ENCODE measurements at regions of chr2 and their contacts with region 1.

Region 1: DNA sequence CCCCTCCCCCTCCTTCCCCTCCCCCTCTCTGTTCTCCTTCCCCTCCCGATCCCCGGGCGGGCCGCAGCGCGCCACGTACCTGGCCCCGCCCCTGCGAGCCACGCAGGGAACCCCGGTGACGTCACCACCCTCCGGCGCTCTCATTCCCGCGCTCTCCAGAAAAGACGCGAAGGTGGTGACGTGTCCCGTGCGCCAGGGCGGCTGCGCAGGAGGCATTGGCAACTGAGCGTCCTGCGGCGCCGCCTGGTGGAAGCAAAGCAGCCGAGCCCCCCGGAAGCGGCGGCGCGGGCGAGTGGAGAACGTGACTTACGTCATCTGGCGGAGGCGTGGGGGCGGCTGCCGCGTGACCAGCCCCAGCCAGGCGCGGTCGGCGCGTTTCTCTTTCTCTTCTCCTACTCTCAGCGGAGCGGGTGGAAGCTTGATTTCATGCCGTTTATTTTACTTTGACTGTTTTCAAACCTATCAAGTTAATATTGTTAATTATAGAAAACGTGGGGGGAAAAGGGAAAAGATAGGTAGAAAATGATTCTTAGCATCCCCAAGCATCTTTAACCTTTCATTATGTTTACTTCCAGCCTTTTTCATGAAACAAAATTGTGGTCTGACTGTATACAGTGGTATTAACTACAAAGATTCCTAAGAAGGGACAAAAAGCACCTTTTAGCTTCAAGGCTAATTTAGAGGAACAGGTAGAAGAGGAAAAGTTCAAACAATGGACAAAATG is 48.1 kb downstream of the C2orf42 start:
- DNase-seq: peak; percentile 100
- ATAC-seq: peak; percentile 74
- H3K4me3 Mint-ChIP-seq: peak overlapping the region; percentile 84
- H3K27ac Mint-ChIP-seq: peak overlapping the region; percentile 96
- H3K4me1 Mint-ChIP-seq: peaks cover 76% of the 10 kb centered on the region
- H3K27me3 Mint-ChIP-seq: no peaks in the 10 kb centered on the region

Region 2: DNA sequence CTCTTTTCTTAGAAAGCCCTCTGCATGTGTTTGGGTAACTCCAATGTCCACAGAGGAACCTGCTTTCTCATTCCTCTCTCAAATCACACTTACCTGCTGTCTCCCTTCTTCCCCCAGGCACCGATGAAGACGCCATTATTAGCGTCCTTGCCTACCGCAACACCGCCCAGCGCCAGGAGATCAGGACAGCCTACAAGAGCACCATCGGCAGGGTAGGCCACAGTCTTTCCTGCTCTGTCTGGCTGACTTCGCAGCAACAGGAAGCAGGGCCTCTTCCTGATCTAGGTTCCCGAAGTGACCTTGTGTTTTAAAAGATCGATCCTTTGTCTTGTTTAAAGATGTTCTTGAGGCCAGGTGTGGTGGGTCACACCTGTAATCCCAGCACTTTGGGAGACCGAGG is 338.3 kb before region 1 on chr2:
- CTCF ChIA-PET with region 1: no interaction called
- POLR2A ChIA-PET with region 1: no interaction called
- DNase-seq: peak; percentile 20
- ATAC-seq: peak; percentile 33
- H3K4me3 Mint-ChIP-seq: no peak overlapping the region
- H3K27ac Mint-ChIP-seq: peak overlapping the region; percentile 82
- H3K4me1 Mint-ChIP-seq: peaks cover 19% of the 10 kb centered on the region
- H3K27me3 Mint-ChIP-seq: peaks cover 2% of the 10 kb centered on the region

Region 3: GRCh38 chr2:70062268-70062667 is 80.5 kb before region 1 on chr2:
- CTCF ChIA-PET with region 1: interaction called, 19 read pairs
- POLR2A ChIA-PET with region 1: interaction called, 3 read pairs
- DNase-seq: peak; percentile 41
- ATAC-seq: no peak
- H3K4me3 Mint-ChIP-seq: no peak overlapping the region
- H3K27ac Mint-ChIP-seq: no peak overlapping the region
- H3K4me1 Mint-ChIP-seq: peaks cover 5% of the 10 kb centered on the region
- H3K27me3 Mint-ChIP-seq: no peaks in the 10 kb centered on the region

Region 4: GRCh38 chr2:70086838-70087701 is 55.7 kb before region 1 on chr2 and contains the start of gene PCBP1:
- CTCF ChIA-PET with region 1: interaction called, 41 read pairs
- POLR2A ChIA-PET with region 1: interaction called, 370 read pairs
- DNase-seq: peak; percentile 96
- ATAC-seq: peak; percentile 45
- H3K4me3 Mint-ChIP-seq: peak within 1 kb of the TSS; percentile 97
- H3K27ac Mint-ChIP-seq: peak within 1 kb of the TSS; percentile 100
- H3K4me1 Mint-ChIP-seq: peaks cover 57% of the 10 kb centered on the region
- H3K27me3 Mint-ChIP-seq: no peaks in the 10 kb centered on the region
- total RNA-seq, gene PCBP1: 516 to 518 TPM

Region 5: DNA sequence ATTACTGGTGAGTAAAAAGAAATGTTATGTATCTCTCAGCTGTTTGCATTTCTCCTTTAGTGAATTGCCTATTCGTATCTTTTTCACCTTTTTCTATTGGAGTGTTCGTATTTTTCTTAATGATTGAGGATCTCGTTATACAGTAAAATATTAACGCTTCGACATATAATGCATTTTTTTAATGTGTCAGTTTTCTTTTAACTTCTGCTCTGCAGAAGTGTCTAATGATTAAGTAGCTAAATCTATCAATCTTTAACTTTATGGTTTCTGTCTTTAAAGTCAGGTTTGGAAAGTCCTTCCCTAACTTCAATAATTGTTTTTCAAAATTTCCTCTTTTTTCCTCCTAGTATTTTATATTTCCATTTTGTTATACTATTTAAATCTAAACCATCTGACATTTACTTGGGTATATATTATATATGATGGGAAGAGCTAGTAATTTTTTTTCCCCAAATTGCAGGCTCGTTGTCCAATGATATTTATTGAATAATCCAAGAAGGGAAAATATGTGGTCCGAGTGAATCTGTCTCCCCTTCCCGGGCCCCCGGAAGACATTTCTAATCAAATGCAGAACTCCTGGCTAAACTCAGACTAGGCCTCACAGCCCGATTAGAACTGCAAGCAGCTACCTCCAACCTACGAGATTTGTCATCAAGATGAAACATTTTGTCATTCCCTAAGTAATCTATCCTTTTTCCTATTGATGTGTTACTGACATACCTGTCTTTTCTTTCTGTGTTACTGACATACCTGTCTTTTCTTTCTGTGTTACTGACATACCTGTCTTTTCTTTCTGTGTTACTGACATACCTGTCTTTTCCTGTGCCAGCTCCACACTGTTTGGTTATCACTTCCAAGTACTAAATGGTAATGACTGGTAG is 38.3 kb before region 1 on chr2:
- CTCF ChIA-PET with region 1: interaction called, 16 read pairs
- POLR2A ChIA-PET with region 1: interaction called, 27 read pairs
- DNase-seq: peak; percentile 64
- ATAC-seq: no peak
- H3K4me3 Mint-ChIP-seq: peak overlapping the region; percentile 77
- H3K27ac Mint-ChIP-seq: peak overlapping the region; percentile 95
- H3K4me1 Mint-ChIP-seq: peaks cover 62% of the 10 kb centered on the region
- H3K27me3 Mint-ChIP-seq: no peaks in the 10 kb centered on the region

Region 6: DNA sequence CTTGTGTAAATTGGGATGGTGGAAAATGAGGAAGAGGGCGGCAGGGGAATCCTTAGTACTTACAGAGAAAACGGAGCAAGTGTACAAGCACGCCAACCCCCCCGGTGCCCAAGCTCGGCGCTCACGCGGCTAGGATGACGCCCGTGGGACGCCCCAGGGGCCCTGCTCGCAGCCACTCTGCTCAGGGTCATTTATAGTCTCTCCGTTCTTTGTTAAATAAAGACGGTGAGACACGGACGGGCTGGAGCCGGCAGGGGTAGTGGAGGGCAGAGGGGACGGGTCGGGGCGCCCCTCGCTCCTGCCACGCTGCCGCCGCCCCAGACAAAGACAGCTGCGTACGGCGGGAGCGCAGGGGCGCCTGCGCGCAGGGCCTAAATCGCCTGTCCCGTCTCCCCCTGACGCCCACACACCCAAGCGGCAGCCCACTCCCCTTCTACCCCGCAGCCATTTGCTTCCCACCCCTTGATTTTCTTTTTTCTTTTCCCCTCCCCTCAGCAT is 17.7 kb before region 1 on chr2:
- CTCF ChIA-PET with region 1: interaction called, 19 read pairs
- POLR2A ChIA-PET with region 1: interaction called, 44 read pairs
- DNase-seq: peak; percentile 69
- ATAC-seq: peak; percentile 70
- H3K4me3 Mint-ChIP-seq: peak overlapping the region; percentile 90
- H3K27ac Mint-ChIP-seq: peak overlapping the region; percentile 99
- H3K4me1 Mint-ChIP-seq: peaks cover 78% of the 10 kb centered on the region
- H3K27me3 Mint-ChIP-seq: no peaks in the 10 kb centered on the region

Region 7: DNA sequence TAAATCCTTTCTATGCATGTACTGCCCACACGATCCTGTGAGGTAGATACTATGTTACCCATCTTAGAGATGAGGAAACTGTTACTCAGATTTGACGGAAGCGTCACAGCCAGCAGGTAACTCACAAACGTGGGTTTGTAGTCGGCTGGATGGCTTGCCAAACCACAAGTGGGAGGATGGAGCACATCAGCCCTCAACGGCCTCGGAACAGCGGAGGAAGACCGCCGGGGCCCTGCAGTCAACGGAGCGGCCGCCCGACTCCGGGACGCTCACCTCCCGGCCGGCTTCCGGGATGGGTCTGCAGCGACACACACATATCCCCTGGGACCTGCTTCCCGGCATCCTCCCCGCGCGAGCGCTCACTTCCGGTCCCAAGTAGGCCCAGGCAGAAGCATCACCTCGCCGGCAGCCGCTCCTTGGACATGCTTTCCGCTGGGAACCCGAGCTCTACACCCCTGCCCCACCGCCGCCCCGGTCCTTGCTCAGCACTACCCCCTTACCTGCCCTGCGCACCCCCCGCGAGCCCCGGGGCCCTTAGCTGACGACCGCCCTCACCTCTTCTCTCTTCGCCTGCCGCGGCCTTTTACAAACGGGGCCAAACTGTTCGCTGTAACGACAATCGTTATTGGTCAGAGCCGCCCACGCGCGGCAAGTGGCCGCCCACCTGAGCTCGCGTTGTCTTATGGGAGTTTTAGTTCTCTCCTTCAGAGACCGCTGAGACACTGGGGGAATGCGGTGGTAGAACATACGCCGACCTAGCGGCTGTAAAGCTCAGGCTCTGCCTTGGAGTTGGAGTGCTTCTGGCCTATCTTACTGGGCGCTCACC is 47.9 kb after region 1 on chr2 and contains the start of gene C2orf42:
- CTCF ChIA-PET with region 1: interaction called, 5 read pairs
- POLR2A ChIA-PET with region 1: interaction called, 15 read pairs
- DNase-seq: peak; percentile 97
- ATAC-seq: peak; percentile 90
- H3K4me3 Mint-ChIP-seq: peak within 1 kb of the TSS; percentile 86
- H3K27ac Mint-ChIP-seq: peak within 1 kb of the TSS; percentile 97
- H3K4me1 Mint-ChIP-seq: peaks cover 21% of the 10 kb centered on the region
- H3K27me3 Mint-ChIP-seq: no peaks in the 10 kb centered on the region
- total RNA-seq, gene C2orf42: 23.0 to 29.4 TPM